ENCODE measurements at regions of chr7 and their contacts with region 1.

Region 1: DNA sequence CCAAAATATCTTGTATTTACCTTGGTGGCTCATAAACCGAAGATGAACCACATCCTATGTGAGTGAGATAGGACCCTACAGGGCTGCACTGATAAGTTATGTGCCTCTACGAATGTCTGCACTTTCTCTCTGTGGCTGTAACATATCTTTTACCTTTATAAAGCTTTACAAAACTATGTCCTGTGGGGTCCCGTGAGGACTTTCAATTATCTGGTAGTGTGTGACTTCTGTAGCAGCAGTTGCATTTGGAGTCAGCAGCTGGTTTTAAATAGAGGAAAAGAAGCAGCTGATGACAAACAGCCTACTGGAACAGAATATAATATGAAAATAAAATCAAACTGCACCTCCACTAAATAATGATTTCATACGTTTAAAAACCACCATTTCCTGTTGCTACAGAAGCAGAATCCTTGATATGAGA is 222.4 kb upstream of the GNAI1 start:
- DNase-seq: peak in 6 of 9 donors; percentile 19 to 42 (median 28)
- ATAC-seq: no peak
- H3K4me3 ChIP-seq: peak overlapping the region; percentile 10
- H3K4me3 Mint-ChIP-seq: peak overlapping the region in 9 of 10 donors; percentile 51 to 77 (median 69)
- H3K27ac ChIP-seq: peak overlapping the region; percentile 38
- H3K27ac Mint-ChIP-seq: peak overlapping the region; percentile 32 to 88 (median 67)
- H3K4me1 ChIP-seq: peaks cover 0 to 29% of the 10 kb centered on the region in 2 donors
- H3K4me1 Mint-ChIP-seq: peaks cover 3 to 73% (median 64%) of the 10 kb centered on the region in 7 donors
- H3K27me3 ChIP-seq: no peaks in the 10 kb centered on the region
- H3K27me3 Mint-ChIP-seq: no peaks in the 10 kb centered on the region

Region 2: DNA sequence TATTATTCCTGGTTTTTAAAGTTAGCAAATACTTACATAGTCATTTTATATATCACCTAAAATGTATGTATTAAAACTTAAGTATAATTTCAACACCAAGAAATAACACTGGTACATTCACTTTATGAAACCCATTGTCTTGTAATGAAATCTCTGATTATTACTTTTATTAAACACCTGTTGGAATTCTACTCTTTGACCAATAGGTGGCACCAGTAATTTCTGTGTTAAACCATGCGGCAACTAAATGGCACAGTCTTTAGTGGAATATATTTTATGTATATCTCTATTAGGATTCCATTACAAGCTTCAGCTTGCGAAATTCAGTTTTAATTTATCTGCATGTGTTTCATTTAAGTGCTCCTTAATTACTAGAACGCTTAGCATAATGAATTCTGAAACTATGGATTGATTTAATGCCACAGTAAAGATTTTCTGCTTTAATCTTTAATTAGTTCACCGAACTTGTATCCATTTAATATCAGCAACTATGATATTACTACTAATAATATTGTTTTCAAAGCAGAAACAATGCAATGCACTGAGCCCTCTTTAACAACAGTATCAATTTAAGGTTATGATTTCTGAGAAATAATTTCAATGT is 640.1 kb before region 1 on chr7:
- CTCF ChIA-PET with region 1: no interaction called
- POLR2A ChIA-PET with region 1: no interaction called
- intact Hi-C with region 1: loop called in 1 of 2 experiments (anchors 1 kb)
- DNase-seq: peak in 2 of 9 donors; percentile 15 to 22
- ATAC-seq: no peak
- H3K4me3 ChIP-seq: no peak overlapping the region
- H3K4me3 Mint-ChIP-seq: no peak overlapping the region
- H3K27ac ChIP-seq: no peak overlapping the region
- H3K27ac Mint-ChIP-seq: no peak overlapping the region
- H3K4me1 ChIP-seq: no peaks in the 10 kb centered on the region
- H3K4me1 Mint-ChIP-seq: no peaks in the 10 kb centered on the region
- H3K27me3 ChIP-seq: no peaks in the 10 kb centered on the region
- H3K27me3 Mint-ChIP-seq: no peaks in the 10 kb centered on the region

Region 3: GRCh38 chr7:79504712-79505389 is 407.4 kb before region 1 on chr7:
- CTCF ChIA-PET with region 1: interaction called, 3 read pairs
- POLR2A ChIA-PET with region 1: no interaction called
- intact Hi-C with region 1: loop called in 1 of 2 experiments (anchors 2 kb)
- DNase-seq: peak in 1 of 9 donors; percentile 0
- ATAC-seq: no peak
- H3K4me3 ChIP-seq: no peak overlapping the region
- H3K4me3 Mint-ChIP-seq: no peak overlapping the region
- H3K27ac ChIP-seq: no peak overlapping the region
- H3K27ac Mint-ChIP-seq: peak overlapping the region in 1 of 9 donors; percentile 9
- H3K4me1 ChIP-seq: no peaks in the 10 kb centered on the region
- H3K4me1 Mint-ChIP-seq: no peaks in the 10 kb centered on the region
- H3K27me3 ChIP-seq: no peaks in the 10 kb centered on the region
- H3K27me3 Mint-ChIP-seq: no peaks in the 10 kb centered on the region

Region 4: DNA sequence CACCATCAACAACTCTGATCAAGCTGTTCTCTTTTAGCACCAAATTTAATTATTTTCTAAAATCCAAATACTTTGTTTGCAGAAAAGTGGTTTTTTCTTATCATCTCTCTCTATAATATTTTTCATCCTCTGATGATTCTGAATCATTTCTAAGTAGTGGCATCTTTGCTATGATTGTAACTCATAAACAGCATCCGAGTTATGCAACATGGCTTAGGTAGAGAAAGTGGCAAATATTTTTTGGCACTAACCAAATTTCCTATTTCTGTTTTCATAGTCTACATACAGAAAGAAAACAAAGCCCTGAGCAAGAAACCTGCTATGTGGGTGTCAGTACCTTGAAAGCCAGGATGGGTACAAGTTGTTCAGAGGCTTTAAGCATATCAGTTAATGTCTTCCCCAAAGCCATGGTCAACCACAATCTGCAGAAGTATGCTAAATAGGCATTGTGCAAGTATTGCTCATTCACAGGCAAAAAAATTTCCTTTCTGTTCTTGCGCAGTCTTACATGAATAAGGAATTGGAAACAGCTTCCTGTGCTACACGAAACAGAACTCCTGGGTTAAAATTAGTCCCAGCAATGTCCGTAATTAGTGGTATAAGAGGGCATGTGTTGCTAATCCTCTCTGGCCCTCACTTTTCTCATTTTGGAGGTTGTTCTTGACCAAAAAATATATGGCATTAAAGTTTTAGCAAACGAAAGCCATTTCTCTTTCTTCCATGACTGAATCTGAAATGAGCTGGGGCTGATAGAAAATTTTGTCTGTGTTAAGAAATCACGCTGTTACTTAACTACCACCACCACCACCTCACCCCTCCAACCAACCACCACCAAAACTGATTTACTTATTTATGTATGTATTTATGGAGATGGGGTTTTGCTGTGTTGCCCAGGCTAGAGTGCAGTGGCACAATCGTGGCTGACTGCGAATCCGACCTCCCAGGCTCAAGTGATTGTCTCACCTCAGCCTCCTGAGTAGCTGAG is 133.1 kb before region 1 on chr7:
- CTCF ChIA-PET with region 1: no interaction called
- POLR2A ChIA-PET with region 1: no interaction called
- intact Hi-C with region 1: no loop called
- DNase-seq: no peak
- ATAC-seq: peak; percentile 57
- H3K4me3 ChIP-seq: no peak overlapping the region
- H3K4me3 Mint-ChIP-seq: no peak overlapping the region
- H3K27ac ChIP-seq: no peak overlapping the region
- H3K27ac Mint-ChIP-seq: no peak overlapping the region
- H3K4me1 ChIP-seq: no peaks in the 10 kb centered on the region
- H3K4me1 Mint-ChIP-seq: no peaks in the 10 kb centered on the region
- H3K27me3 ChIP-seq: no peaks in the 10 kb centered on the region
- H3K27me3 Mint-ChIP-seq: no peaks in the 10 kb centered on the region

Region 5: DNA sequence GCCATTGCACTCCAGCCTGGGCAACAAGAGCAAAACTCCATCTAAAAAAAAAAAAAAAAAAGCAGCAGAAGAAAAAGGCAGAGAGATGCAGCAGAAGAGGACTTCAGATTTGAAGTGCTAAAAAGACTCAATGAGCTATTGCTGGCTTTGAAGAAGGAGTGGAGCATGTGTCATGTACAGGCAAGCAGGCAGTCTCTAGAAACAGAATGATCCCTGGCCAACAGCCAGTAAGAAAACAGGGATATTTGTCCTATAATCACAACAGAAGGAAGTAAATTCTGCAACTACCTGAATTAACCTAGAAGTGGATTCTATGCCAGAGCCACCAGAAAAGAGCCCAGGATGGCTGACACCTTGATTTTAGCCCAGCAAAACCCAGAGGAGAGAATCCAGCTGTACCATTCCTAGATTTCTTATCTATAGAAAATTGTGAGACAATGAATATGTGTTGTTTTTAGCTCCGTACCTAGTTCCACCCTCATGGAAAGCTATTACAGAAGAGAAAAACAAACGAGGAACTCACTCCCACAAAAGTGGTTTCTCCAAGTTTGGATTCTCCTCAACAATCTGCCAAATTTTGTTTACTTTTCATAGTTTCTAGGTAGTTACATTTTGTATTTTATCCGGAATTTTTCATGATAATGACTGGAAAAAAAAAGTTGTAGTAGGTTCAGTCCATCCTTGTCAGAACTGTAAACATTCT is 24.2 kb after region 1 on chr7:
- CTCF ChIA-PET with region 1: no interaction called
- POLR2A ChIA-PET with region 1: interaction called, 3 read pairs
- intact Hi-C with region 1: loop called in 1 of 2 experiments (anchors 2 kb)
- DNase-seq: no peak
- ATAC-seq: no peak
- H3K4me3 ChIP-seq: no peak overlapping the region
- H3K4me3 Mint-ChIP-seq: no peak overlapping the region
- H3K27ac ChIP-seq: no peak overlapping the region
- H3K27ac Mint-ChIP-seq: no peak overlapping the region
- H3K4me1 ChIP-seq: no peaks in the 10 kb centered on the region
- H3K4me1 Mint-ChIP-seq: peaks cover 0 to 7% (median 3%) of the 10 kb centered on the region in 7 donors
- H3K27me3 ChIP-seq: no peaks in the 10 kb centered on the region
- H3K27me3 Mint-ChIP-seq: no peaks in the 10 kb centered on the region

Region 6: DNA sequence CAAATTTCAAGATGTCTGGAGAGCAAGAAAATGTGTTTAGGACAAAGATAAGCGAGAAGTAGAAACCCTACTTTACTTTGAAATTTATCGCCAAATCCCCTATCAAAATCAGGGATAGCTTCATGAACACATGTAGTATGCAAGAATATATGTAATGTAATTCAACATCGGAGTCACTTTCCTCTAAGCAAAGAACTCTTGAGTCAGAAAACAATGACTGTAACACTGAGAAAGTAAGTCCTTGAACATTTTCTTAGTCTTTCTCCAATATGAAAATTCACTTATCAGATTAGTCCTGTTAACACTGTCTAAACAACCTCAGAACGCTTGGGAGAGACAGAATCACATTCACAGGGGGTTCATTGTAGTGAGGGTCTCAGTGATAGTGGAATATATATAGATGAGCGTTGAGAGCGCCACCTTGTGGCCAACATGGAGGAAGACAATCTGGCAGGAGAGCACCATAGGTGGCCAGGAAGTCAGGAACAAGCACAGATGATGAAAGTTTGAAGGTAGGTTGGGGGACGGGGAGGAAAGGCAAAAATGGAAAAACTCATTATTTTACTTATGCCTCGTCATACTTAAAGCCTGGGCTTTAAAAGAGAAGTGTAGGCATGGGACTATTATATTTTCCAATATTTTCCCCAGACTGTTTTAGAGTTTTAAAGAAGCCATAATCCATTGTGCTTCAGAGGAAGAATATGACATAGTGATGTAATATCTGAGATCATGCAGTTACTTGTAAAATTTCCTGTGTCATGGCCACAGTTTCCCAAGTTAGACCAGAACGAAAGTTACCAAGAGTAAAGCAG is 106.9 kb after region 1 on chr7:
- CTCF ChIA-PET with region 1: interaction called, 3 read pairs
- POLR2A ChIA-PET with region 1: interaction called, 4 read pairs
- intact Hi-C with region 1: loop called in 1 of 2 experiments (anchors 1 kb)
- DNase-seq: peak in 8 of 9 donors; percentile 8 to 50 (median 26)
- ATAC-seq: peak; percentile 58
- H3K4me3 ChIP-seq: no peak overlapping the region
- H3K4me3 Mint-ChIP-seq: no peak overlapping the region
- H3K27ac ChIP-seq: no peak overlapping the region
- H3K27ac Mint-ChIP-seq: no peak overlapping the region
- H3K4me1 ChIP-seq: no peaks in the 10 kb centered on the region
- H3K4me1 Mint-ChIP-seq: no peaks in the 10 kb centered on the region
- H3K27me3 ChIP-seq: no peaks in the 10 kb centered on the region
- H3K27me3 Mint-ChIP-seq: no peaks in the 10 kb centered on the region